Activated CD4-positive, alpha-beta memory T cell treated with anti-CD3 and anti-CD28 coated beads for 36 hours (primary cell): ENCODE measurements at regions of chr11 and their contacts with region 1.

Region 1: DNA sequence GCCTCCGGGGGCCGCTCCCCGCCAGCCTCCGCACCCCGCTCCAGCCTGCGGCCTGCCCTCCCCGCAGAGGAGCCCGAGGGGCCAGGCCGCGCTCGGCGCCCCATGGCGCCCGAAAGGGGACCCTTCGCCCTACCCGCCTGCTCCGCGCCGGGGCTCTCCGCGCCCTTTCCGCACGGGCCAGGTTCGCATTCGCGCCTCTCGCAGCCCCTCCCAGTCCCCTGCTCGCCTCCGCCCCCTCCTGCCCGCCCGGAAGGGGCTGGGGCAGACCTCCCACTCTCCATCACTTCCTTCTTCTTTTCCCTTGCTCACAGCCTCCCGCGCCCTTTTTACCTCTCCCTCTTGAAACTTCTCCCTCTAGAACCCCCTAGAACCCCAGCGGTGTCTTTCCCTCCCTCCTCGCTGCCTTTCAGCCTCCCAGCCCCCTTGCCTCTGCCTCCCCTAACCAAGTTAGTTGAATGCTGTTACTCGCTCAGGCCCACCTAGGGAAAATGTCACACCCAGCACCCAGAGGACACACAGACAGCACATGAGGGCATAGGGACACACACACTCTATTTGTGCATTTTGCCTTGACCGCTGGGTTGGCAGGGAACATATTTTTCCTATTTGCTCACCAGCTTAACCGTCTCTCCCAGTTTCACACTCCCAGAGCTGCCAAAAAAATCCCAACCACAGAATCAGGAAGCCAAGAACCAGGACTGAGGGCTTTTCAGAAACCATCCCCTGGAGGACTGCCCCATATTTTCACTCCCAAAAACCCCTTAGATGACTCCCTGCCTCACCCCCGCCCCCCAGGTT is at the start of gene SLC43A3:
- DNase-seq: peak; percentile 87
- H3K4me3 Mint-ChIP-seq: peak within 1 kb of the TSS; percentile 96
- H3K27ac Mint-ChIP-seq: peak within 1 kb of the TSS; percentile 92
- H3K4me1 Mint-ChIP-seq: peaks cover 41% of the 10 kb centered on the region
- H3K27me3 Mint-ChIP-seq: no peaks in the 10 kb centered on the region
- total RNA-seq, gene SLC43A3: 170 to 186 TPM

Region 2: DNA sequence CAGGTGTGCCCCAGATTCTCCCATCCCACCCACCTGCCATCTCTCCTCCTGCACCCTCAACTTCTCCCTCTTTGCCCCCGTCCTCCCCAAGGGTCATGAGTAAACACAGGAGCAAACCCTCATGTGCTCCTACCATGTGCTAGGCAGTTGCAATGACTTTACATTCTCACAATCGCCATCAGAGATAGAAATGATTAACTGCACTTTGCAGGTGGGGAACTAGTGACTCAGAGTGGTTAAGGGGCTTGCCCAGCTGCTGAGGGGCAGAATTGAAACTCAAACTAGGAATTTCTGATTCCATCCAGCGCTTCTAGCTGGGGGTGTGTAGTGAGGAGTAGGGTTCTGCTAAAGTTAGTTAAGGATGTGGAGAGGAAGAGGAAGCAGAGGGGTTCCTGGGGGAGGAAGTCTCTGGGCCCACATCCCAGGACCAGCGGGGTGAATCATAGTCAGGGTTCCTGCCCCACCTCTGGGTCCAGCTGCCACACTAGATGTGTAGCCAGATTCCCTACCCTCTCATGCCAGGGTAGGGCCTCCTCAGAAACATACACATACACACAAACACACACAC is 20.7 kb before region 1 on chr11:
- CTCF ChIA-PET with region 1: interaction called, 3 read pairs
- POLR2A ChIA-PET with region 1: interaction called, 28 read pairs
- intact Hi-C with region 1: loop called (anchors 1 kb)
- DNase-seq: peak; percentile 75
- H3K4me3 Mint-ChIP-seq: no peak overlapping the region
- H3K27ac Mint-ChIP-seq: peak overlapping the region; percentile 84
- H3K4me1 Mint-ChIP-seq: peaks cover 61% of the 10 kb centered on the region
- H3K27me3 Mint-ChIP-seq: no peaks in the 10 kb centered on the region

Region 3: DNA sequence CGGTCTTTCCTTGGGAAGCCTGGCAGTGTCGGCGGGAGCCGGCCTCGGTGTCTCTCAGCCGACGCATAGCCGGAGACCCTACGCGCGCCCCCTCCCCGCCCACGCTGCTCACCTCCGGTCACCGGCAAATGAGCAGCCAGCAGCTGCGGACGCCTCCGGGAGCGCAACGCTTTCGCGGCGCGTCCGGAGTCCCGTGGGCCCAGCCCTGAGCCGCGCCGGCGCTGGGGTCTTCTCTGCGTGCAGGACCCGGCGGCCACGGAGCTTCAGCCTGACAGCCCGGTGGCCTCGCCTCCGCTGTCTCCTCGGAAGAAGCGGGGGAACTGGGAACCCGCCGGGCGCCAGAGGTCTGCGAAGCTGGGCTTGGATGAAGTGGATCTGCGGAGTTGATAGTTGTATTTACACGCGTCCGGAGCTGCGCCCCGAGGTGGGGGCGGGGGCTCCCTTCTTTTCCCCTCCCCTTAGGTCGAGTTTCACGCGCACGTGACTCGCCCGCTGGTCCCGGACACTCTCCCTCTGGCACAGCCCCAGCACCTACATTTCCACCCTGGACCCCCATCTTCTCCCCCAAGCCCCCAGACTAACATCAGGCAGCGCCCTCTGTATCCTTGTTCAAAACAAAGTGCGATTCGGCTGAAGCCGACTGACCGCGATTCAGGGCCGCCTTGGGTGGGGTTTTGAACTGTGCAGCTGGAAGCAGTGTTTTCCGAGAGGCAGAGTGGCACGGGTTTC is 88.4 kb after region 1 on chr11 and contains the start of gene SLC43A1:
- CTCF ChIA-PET with region 1: no interaction called
- POLR2A ChIA-PET with region 1: interaction called, 10 read pairs
- intact Hi-C with region 1: no loop called
- DNase-seq: peak; percentile 60
- H3K4me3 Mint-ChIP-seq: peak within 1 kb of the TSS; percentile 96
- H3K27ac Mint-ChIP-seq: peak within 1 kb of the TSS; percentile 79
- H3K4me1 Mint-ChIP-seq: peaks cover 29% of the 10 kb centered on the region
- H3K27me3 Mint-ChIP-seq: no peaks in the 10 kb centered on the region
- total RNA-seq, gene SLC43A1: 23.1 to 23.3 TPM

Region 4: DNA sequence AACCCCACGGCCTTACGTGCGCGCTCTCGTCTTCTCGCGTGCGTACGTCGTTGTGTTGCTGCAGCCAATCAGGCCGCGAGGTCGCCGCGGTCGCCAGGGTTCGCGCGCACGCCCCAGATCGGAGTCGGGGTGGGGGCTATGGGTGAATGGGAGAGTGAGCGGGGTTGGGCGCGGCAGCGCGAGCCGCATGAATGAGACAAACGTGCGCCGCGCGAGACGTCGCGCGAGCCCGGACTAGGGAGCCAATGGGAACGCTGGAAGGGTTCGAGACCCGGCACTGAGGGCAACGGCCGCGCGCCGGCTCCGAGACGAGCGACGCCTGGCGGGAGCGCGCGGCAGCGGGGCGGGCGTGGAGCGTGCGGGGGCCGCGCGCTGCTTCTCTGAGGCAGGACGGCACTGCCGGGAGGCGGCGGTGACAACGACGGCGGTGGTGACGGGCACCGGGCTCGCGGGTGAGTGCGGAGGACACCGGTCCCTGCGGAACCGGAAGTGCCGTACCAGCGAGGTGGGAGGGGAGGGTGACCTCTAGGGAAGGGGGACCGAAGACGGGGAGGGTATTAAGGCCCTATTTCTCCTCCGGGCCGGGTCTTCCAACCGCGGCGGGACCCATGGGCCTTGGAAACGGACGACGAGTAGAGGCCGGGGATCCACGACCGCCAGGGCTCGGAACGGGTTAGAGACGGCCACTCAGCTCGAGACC is 240.8 kb after region 1 on chr11 and contains the start of gene ZDHHC5:
- CTCF ChIA-PET with region 1: no interaction called
- POLR2A ChIA-PET with region 1: interaction called, 3 read pairs
- intact Hi-C with region 1: loop called (anchors 1 kb)
- DNase-seq: peak; percentile 100
- H3K4me3 Mint-ChIP-seq: peak within 1 kb of the TSS; percentile 83
- H3K27ac Mint-ChIP-seq: peak within 1 kb of the TSS; percentile 100
- H3K4me1 Mint-ChIP-seq: peaks cover 41% of the 10 kb centered on the region
- H3K27me3 Mint-ChIP-seq: no peaks in the 10 kb centered on the region
- total RNA-seq, gene ZDHHC5: 56.8 to 65.5 TPM

Region 5: GRCh38 chr11:57741132-57742086 is 314.3 kb after region 1 on chr11 and contains the start of gene SELENOH:
- CTCF ChIA-PET with region 1: no interaction called
- POLR2A ChIA-PET with region 1: interaction called, 3 read pairs
- intact Hi-C with region 1: loop called (anchors 2 kb)
- DNase-seq: peak; percentile 98
- H3K4me3 Mint-ChIP-seq: peak within 1 kb of the TSS; percentile 97
- H3K27ac Mint-ChIP-seq: peak within 1 kb of the TSS; percentile 99
- H3K4me1 Mint-ChIP-seq: peaks cover 40% of the 10 kb centered on the region
- H3K27me3 Mint-ChIP-seq: no peaks in the 10 kb centered on the region
- total RNA-seq, gene SELENOH: 235 to 252 TPM

Region 6: DNA sequence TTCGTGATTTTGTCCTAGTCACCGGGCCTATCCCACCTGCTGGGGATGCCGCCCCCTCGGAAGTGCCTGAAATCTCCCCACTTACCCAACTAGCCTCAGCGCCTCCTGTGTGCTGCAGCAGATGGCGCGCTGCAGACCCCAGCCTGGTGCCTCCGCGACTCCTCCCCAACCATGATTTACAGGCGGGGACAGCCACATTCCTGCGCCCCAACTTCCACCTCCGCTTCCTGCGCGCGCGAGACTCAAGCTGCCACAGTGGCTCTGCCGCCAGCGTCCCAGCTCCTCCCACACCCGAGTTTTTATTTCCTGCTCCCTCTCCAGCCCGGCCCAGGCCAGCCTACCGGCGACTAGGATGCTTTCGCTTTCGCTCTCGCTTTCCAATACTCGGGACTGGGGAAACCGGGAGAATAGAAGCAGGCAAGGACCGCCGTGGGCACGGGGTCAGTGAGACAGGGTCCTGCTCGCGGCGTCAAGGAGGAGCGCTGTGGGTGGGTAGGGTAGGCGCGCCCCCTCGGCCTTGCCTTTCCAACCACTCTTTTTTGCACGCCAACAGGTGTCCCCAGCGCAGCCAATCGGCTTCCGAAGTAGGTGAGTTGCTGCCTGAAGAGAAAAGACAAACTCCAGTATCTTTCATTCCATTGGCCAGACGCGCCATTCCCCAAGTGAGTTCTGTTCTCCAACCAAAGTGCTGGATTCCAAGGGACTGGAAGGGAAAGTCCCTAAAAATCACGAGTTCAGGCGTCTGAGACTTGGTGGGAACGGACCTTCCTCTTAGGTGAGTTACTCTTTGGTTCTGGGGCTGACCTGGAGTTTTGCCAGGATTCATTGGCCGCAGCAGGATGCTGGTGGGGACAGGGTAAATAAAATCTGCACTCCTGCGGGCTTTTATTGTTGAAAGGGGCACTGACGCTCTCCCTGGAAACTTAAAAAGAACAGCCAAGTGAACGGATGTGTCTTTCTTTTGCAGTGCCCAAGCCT is 1715.7 kb after region 1 on chr11 and contains the start of gene FAM111A:
- CTCF ChIA-PET with region 1: no interaction called
- POLR2A ChIA-PET with region 1: no interaction called
- intact Hi-C with region 1: loop called (anchors 10 kb)
- DNase-seq: peak; percentile 90
- H3K4me3 Mint-ChIP-seq: peak within 1 kb of the TSS; percentile 94
- H3K27ac Mint-ChIP-seq: peak within 1 kb of the TSS; percentile 93
- H3K4me1 Mint-ChIP-seq: peaks cover 50% of the 10 kb centered on the region
- H3K27me3 Mint-ChIP-seq: no peaks in the 10 kb centered on the region
- total RNA-seq, gene FAM111A: 87.6 to 87.8 TPM